ENCODE measurements at regions of chr4 and their contacts with region 1.

Region 1: GRCh38 chr4:147590249-147590920 is 26.8 kb upstream of the TMEM184C start:
- DNase-seq: peak; percentile 61
- ATAC-seq: no peak
- H3K4me3 Mint-ChIP-seq: no peak overlapping the region
- H3K27ac Mint-ChIP-seq: no peak overlapping the region
- H3K4me1 Mint-ChIP-seq: peaks cover 5% of the 10 kb centered on the region
- H3K27me3 Mint-ChIP-seq: peaks cover 14% of the 10 kb centered on the region

Region 2: GRCh38 chr4:147160908-147161513 is 429.4 kb before region 1 on chr4:
- CTCF ChIA-PET with region 1: interaction called, 10 read pairs
- POLR2A ChIA-PET with region 1: no interaction called
- DNase-seq: peak; percentile 21
- ATAC-seq: no peak
- H3K4me3 Mint-ChIP-seq: no peak overlapping the region
- H3K27ac Mint-ChIP-seq: no peak overlapping the region
- H3K4me1 Mint-ChIP-seq: no peaks in the 10 kb centered on the region
- H3K27me3 Mint-ChIP-seq: peaks cover 19% of the 10 kb centered on the region

Region 3: DNA sequence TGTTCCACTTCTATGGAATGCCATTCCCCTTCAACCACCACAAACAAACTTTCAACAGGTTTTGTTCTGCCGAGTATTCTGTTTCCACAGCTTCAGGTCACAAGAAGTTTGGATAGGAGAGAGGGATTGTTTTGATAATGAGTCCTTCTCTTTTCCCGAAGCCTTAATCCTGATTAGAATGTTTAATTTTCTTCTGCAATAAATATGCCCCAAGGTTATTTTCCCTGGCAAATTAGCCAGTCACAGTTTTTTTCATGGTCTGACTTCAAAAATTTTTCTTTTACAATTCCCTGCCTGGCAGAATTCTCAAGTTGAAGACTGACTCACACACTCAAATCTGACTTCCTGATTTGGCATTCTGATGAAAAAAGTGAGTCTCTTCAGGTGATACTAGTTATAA is 142.6 kb before region 1 on chr4:
- CTCF ChIA-PET with region 1: no interaction called
- POLR2A ChIA-PET with region 1: no interaction called
- DNase-seq: no peak
- ATAC-seq: no peak
- H3K4me3 Mint-ChIP-seq: no peak overlapping the region
- H3K27ac Mint-ChIP-seq: no peak overlapping the region
- H3K4me1 Mint-ChIP-seq: no peaks in the 10 kb centered on the region
- H3K27me3 Mint-ChIP-seq: no peaks in the 10 kb centered on the region

Region 4: GRCh38 chr4:147518846-147519767 is 71.3 kb before region 1 on chr4:
- CTCF ChIA-PET with region 1: interaction called, 29 read pairs
- POLR2A ChIA-PET with region 1: no interaction called
- DNase-seq: peak; percentile 64
- ATAC-seq: peak; percentile 60
- H3K4me3 Mint-ChIP-seq: no peak overlapping the region
- H3K27ac Mint-ChIP-seq: no peak overlapping the region
- H3K4me1 Mint-ChIP-seq: no peaks in the 10 kb centered on the region
- H3K27me3 Mint-ChIP-seq: peaks cover 9% of the 10 kb centered on the region

Region 5: GRCh38 chr4:147607471-147607870 is 17.1 kb after region 1 on chr4:
- CTCF ChIA-PET with region 1: no interaction called
- POLR2A ChIA-PET with region 1: no interaction called
- DNase-seq: no peak
- ATAC-seq: no peak
- H3K4me3 Mint-ChIP-seq: no peak overlapping the region
- H3K27ac Mint-ChIP-seq: no peak overlapping the region
- H3K4me1 Mint-ChIP-seq: no peaks in the 10 kb centered on the region
- H3K27me3 Mint-ChIP-seq: peaks cover 15% of the 10 kb centered on the region